Dendritic cell treated with granulocyte-macrophage colony-stimulating factor and Interleukin-4, amounts not matched to agents 40 ng/mL and 50 ng/mL, for 4 days (primary cell): ENCODE measurements at regions of chr16 and their contacts with region 1.

Region 1: GRCh38 chr16:69796351-69797118 is 34.4 kb downstream of the WWP2 start:
- H3K4me3 Mint-ChIP-seq: no peak overlapping the region
- H3K27ac Mint-ChIP-seq: no peak overlapping the region
- H3K4me1 Mint-ChIP-seq: peaks cover 6% of the 10 kb centered on the region
- H3K27me3 Mint-ChIP-seq: no peaks in the 10 kb centered on the region

Region 2: GRCh38 chr16:69848637-69849545 is 52.4 kb after region 1 on chr16:
- intact Hi-C with region 1: no loop called
- H3K4me3 Mint-ChIP-seq: no peak overlapping the region
- H3K27ac Mint-ChIP-seq: peak overlapping the region; percentile 14
- H3K4me1 Mint-ChIP-seq: peaks cover 13% of the 10 kb centered on the region
- H3K27me3 Mint-ChIP-seq: no peaks in the 10 kb centered on the region

Region 3: DNA sequence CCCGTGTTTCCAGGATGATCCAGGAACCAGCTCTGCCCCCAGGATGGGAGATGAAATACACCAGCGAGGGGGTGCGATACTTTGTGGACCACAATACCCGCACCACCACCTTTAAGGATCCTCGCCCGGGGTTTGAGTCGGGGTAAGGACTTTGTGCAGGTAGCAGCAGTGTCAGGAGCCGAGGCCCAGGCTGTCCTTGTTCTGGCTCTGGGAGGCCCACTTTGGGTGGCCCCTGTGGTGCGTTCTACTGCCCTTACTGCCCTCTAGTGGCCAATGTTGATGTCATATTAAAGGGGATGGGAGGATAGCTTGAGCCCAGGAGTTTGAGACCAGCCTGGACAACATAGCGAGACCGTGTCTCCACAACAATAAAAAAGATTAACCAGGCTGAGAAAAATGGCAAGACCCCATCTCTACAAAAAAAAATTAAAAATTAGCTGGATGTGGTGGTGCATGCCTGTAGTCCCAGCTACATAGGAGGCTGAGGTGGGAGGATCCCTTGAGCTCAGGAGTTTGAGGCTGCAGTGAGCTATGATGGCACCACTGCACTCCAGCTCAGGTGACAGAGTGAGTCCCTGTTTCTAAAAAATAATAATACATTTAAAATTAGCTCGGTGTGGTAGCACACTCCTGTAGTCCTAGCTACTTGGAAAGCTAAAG is 133.7 kb after region 1 on chr16:
- intact Hi-C with region 1: loop called (anchors 10 kb)
- H3K4me3 Mint-ChIP-seq: no peak overlapping the region
- H3K27ac Mint-ChIP-seq: no peak overlapping the region
- H3K4me1 Mint-ChIP-seq: no peaks in the 10 kb centered on the region
- H3K27me3 Mint-ChIP-seq: no peaks in the 10 kb centered on the region